Activated CD4-positive, alpha-beta memory T cell treated with anti-CD3 and anti-CD28 coated beads, Interleukin-2, amount 10 ng/mL, durations not matched to agents 7 days and 5 days (primary cell): ENCODE measurements at regions of chr1 and their contacts with region 1.

Region 1: GRCh38 chr1:214261206-214262123 is 19.5 kb upstream of the SMYD2 start:
- DNase-seq: peak; percentile 85
- H3K4me3 Mint-ChIP-seq: no peak overlapping the region
- H3K27ac Mint-ChIP-seq: no peak overlapping the region
- H3K4me1 Mint-ChIP-seq: peaks cover 33% of the 10 kb centered on the region
- H3K27me3 Mint-ChIP-seq: peaks cover 67% of the 10 kb centered on the region

Region 2: GRCh38 chr1:214213136-214213535 is 48.3 kb before region 1 on chr1:
- CTCF ChIA-PET with region 1: interaction called, 20 read pairs
- POLR2A ChIA-PET with region 1: no interaction called
- DNase-seq: no peak
- H3K4me3 Mint-ChIP-seq: no peak overlapping the region
- H3K27ac Mint-ChIP-seq: no peak overlapping the region
- H3K4me1 Mint-ChIP-seq: peaks cover 1% of the 10 kb centered on the region
- H3K27me3 Mint-ChIP-seq: peaks cover 26% of the 10 kb centered on the region

Region 3: DNA sequence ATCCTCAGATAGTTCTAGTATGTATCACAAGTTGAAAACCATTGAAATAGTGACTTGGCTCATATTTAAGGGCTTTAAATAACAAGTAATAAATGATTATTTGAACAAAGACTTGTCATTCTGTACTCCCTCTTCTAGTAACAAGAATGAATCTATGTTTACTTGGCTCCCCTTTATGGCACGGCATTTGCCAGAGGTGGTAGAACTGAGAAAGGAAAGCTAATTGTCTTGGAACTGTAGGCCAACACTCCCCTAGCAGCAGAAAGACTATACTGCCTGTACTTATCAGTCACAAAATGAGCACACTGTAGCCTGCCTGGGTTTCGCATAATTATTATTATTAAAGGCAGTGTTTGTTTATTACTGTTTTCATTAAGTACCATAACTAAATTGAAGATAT is 10.1 kb before region 1 on chr1:
- CTCF ChIA-PET with region 1: interaction called, 25 read pairs
- POLR2A ChIA-PET with region 1: no interaction called
- DNase-seq: no peak
- H3K4me3 Mint-ChIP-seq: no peak overlapping the region
- H3K27ac Mint-ChIP-seq: no peak overlapping the region
- H3K4me1 Mint-ChIP-seq: no peaks in the 10 kb centered on the region
- H3K27me3 Mint-ChIP-seq: peaks cover 44% of the 10 kb centered on the region

Region 4: GRCh38 chr1:214281021-214281719 is 19.7 kb after region 1 on chr1 and contains the start of gene SMYD2:
- CTCF ChIA-PET with region 1: interaction called, 33 read pairs
- POLR2A ChIA-PET with region 1: interaction called, 10 read pairs
- DNase-seq: peak; percentile 73
- H3K4me3 Mint-ChIP-seq: peak within 1 kb of the TSS; percentile 96
- H3K27ac Mint-ChIP-seq: peak within 1 kb of the TSS; percentile 72
- H3K4me1 Mint-ChIP-seq: peaks cover 41% of the 10 kb centered on the region
- H3K27me3 Mint-ChIP-seq: no peaks in the 10 kb centered on the region
- total RNA-seq, gene SMYD2: 33.8 to 34.9 TPM

Region 5: DNA sequence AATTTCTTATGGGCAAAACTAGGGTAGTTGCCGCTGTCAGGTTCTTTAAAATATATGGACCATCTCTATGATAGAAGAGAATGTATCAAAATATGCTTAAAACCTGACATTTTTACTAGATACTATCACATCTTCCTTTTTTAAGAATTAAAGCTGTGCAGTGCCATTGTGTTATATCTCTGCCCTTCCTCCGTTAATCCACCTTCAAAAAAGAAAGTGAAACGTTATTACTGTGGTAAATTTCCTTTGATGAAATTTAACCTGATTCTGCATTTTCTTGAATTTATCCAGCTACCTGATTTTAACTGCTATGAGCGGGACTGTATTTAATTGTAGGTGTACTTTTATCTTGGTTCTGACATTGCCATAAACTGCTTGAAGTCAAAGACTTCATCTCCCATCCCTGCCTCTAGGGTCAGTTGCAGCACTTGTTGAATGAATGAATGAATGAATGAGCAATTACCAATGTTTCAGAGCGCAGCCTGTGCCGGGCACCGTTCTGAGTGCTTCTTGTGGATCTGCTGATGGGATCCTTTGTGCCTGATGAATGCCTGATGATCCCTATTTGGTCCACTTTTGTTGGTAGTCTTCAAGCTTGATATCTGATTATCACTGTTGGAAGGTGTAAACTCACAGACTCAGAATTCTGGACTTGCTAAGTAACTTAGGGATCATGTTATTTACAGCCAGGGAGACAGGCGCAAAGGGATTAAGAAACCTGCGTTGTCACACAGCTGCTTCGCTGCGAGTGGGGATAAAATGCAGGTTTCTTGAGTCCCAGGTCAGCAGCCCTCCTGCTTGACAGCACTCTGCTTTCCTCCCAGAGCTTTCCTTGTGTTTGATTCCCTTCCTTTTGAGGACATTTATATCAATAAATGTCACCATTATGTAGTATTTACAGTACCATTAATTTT is 49.6 kb after region 1 on chr1:
- CTCF ChIA-PET with region 1: interaction called, 15 read pairs
- POLR2A ChIA-PET with region 1: interaction called, 3 read pairs
- DNase-seq: no peak
- H3K4me3 Mint-ChIP-seq: peak overlapping the region; percentile 69
- H3K27ac Mint-ChIP-seq: no peak overlapping the region
- H3K4me1 Mint-ChIP-seq: peaks cover 24% of the 10 kb centered on the region
- H3K27me3 Mint-ChIP-seq: no peaks in the 10 kb centered on the region

Region 6: DNA sequence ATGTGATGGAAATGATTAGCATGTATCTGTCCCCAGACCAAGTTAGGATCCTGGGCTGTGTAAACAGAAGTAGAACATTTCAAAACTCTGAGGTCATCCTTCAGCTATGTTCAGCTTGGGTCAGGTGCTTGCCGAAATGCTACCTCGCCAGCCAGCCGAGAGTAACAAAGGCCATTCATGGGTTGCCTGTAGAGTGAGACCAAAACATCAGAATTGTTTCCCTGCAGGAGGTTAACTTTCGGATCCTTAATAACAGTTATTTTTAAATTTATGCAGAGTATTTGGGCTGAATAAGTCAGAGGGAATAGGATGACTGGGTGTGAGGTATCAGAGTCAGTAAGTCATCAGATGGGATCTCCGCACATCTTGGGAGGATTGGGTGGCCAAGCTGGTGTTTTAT is 55.1 kb after region 1 on chr1:
- CTCF ChIA-PET with region 1: interaction called, 21 read pairs
- POLR2A ChIA-PET with region 1: interaction called, 3 read pairs
- DNase-seq: no peak
- H3K4me3 Mint-ChIP-seq: no peak overlapping the region
- H3K27ac Mint-ChIP-seq: no peak overlapping the region
- H3K4me1 Mint-ChIP-seq: peaks cover 5% of the 10 kb centered on the region
- H3K27me3 Mint-ChIP-seq: no peaks in the 10 kb centered on the region

Region 7: GRCh38 chr1:214321705-214322453 is 60.4 kb after region 1 on chr1:
- CTCF ChIA-PET with region 1: interaction called, 390 read pairs
- POLR2A ChIA-PET with region 1: interaction called, 18 read pairs
- DNase-seq: no peak
- H3K4me3 Mint-ChIP-seq: no peak overlapping the region
- H3K27ac Mint-ChIP-seq: no peak overlapping the region
- H3K4me1 Mint-ChIP-seq: peaks cover 12% of the 10 kb centered on the region
- H3K27me3 Mint-ChIP-seq: no peaks in the 10 kb centered on the region